Activated CD4-positive, alpha-beta T cell treated with anti-CD3 and anti-CD28 coated beads for 36 hours (primary cell): ENCODE measurements at regions of chr22 and their contacts with region 1.

Region 1: DNA sequence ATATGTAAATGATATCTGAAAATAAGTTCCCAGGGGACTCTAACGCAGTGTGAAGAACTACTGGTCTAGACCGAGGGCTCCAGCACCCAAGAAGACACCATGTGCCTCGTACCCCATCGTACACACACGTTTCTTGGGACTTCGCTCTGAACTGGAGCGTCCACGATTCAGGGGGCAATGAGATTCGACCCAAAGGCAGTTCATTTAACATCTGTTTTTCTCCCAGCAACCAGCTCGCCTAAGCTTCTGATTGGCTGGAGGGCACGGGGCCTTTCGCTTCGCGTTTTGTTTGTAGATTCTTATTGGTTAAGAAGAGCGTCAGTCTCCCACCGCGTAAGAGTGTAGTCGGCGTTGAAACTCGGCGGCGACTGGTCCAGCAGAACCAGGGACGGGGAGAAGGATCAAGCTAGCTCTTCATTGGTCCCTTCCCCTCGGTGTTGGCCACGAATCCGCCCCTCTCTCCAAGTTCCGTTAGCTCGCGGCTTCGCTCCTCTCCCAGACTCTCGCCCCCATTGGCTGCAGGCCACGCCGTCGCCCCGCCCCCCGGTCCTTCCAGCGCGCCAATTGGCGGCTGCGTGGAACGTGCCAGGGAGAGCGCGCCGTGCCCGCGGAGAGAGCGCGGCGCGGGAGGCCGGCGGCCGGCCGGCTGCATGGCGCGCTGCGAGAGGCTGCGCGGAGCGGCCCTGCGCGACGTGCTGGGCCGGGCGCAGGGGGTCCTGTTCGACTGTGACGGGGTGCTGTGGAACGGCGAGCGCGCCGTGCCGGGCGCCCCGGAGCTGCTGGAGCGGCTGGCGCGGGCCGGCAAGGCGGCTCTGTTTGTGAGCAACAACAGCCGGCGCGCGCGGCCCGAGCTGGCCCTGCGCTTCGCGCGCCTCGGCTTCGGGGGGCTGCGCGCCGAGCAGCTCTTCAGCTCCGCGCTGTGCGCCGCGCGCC is at the start of gene PDXP:
- DNase-seq: peak; percentile 99
- ATAC-seq: peak; percentile 98
- H3K4me3 Mint-ChIP-seq: peak within 1 kb of the TSS; percentile 86
- H3K27ac Mint-ChIP-seq: peak within 1 kb of the TSS; percentile 91
- H3K4me1 Mint-ChIP-seq: peaks cover 31% of the 10 kb centered on the region
- H3K27me3 Mint-ChIP-seq: no peaks in the 10 kb centered on the region
- total RNA-seq, gene PDXP: 35.8 to 37.8 TPM

Region 2: GRCh38 chr22:37486224-37486845 is 172.1 kb before region 1 on chr22 and contains the start of gene MFNG:
- CTCF ChIA-PET with region 1: no interaction called
- POLR2A ChIA-PET with region 1: no interaction called
- intact Hi-C with region 1: loop called in 1 of 2 experiments (anchors 1 kb)
- DNase-seq: peak; percentile 89
- ATAC-seq: peak; percentile 70
- H3K4me3 Mint-ChIP-seq: peak within 1 kb of the TSS; percentile 92
- H3K27ac Mint-ChIP-seq: peak within 1 kb of the TSS; percentile 92
- H3K4me1 Mint-ChIP-seq: peaks cover 64% of the 10 kb centered on the region
- H3K27me3 Mint-ChIP-seq: no peaks in the 10 kb centered on the region
- total RNA-seq, gene MFNG: 108 to 125 TPM

Region 3: GRCh38 chr22:37643225-37643847 is 15.1 kb before region 1 on chr22:
- CTCF ChIA-PET with region 1: interaction called, 98 read pairs
- POLR2A ChIA-PET with region 1: interaction called, 9 read pairs
- intact Hi-C with region 1: loop called (anchors 1 to 2 kb)
- DNase-seq: peak; percentile 93
- ATAC-seq: peak; percentile 79
- H3K4me3 Mint-ChIP-seq: no peak overlapping the region
- H3K27ac Mint-ChIP-seq: peak overlapping the region; percentile 75
- H3K4me1 Mint-ChIP-seq: peaks cover 37% of the 10 kb centered on the region
- H3K27me3 Mint-ChIP-seq: no peaks in the 10 kb centered on the region

Region 4: GRCh38 chr22:37686002-37686982 is 27.9 kb after region 1 on chr22 and contains the start of gene NOL12:
- CTCF ChIA-PET with region 1: interaction called, 44 read pairs
- POLR2A ChIA-PET with region 1: interaction called, 4 read pairs
- intact Hi-C with region 1: loop called (anchors 1 kb)
- DNase-seq: peak; percentile 84
- ATAC-seq: peak; percentile 82
- H3K4me3 Mint-ChIP-seq: peak within 1 kb of the TSS; percentile 90
- H3K27ac Mint-ChIP-seq: peak within 1 kb of the TSS; percentile 98
- H3K4me1 Mint-ChIP-seq: peaks cover 27% of the 10 kb centered on the region
- H3K27me3 Mint-ChIP-seq: no peaks in the 10 kb centered on the region
- total RNA-seq, gene NOL12: 37.1 to 42.3 TPM

Region 5: DNA sequence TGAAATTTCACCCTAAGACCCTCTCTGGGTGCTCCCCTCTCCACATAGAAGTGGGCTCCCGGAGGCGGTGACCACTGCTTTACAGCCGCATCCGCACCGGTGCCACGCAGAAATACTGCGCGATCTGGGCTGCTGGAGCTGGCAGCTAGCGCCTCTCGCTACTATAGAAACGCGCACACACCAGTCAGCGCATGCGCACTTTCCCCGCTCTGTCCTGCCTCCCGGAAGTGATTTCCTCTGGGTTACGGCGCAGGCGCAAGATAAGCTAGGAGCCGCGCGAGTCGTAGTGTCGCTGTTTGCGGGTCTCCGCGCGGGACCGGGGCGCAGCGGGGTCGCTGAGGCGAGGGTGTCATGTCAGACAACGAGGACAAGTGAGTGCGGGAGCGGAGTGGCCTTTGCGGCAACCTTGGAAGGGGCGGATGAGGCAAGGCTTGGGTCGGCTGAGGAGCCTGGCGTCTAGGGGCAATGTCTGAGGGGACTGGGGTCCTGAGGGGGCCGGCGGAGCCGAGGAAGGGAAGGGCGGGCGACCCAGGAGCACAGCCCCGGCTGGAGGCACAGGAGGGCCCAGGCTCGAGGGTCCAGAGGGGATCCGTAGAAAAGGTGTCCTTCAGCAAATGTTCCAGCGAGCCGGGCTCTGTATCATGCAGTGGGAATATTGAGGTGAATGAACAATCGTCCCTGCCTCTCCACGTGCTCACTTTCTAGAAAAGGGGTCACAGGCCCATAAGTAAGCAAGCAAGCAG is 295.2 kb after region 1 on chr22 and contains the starts of genes C22orf23 and POLR2F:
- CTCF ChIA-PET with region 1: no interaction called
- POLR2A ChIA-PET with region 1: no interaction called
- intact Hi-C with region 1: loop called (anchors 1 kb)
- DNase-seq: peak; percentile 98
- ATAC-seq: peak; percentile 98
- H3K4me3 Mint-ChIP-seq: peak within 1 kb of the TSS; percentile 86
- H3K27ac Mint-ChIP-seq: peak within 1 kb of the TSS; percentile 91
- H3K4me1 Mint-ChIP-seq: peaks cover 26% of the 10 kb centered on the region
- H3K27me3 Mint-ChIP-seq: peaks cover 11% of the 10 kb centered on the region
- total RNA-seq, gene C22orf23: 0.16 TPM in 1 of 2 experiments, not detected in the other
- total RNA-seq, gene POLR2F: 70.5 to 77.8 TPM